Activated CD8-positive, alpha-beta T cell treated with anti-CD3 and anti-CD28 coated beads, Interleukin-2, amount 10 ng/mL, durations not matched to agents 7 days and 5 days (primary cell): ENCODE measurements at regions of chr4 and their contacts with region 1.

Region 1: GRCh38 chr4:155809835-155810234 is 51.0 kb downstream of the GUCY1B1 start:
- DNase-seq: peak; percentile 34
- ATAC-seq: peak; percentile 77
- H3K4me3 Mint-ChIP-seq: no peak overlapping the region
- H3K27ac Mint-ChIP-seq: no peak overlapping the region
- H3K4me1 Mint-ChIP-seq: peaks cover 6% of the 10 kb centered on the region
- H3K27me3 Mint-ChIP-seq: no peaks in the 10 kb centered on the region

Region 2: DNA sequence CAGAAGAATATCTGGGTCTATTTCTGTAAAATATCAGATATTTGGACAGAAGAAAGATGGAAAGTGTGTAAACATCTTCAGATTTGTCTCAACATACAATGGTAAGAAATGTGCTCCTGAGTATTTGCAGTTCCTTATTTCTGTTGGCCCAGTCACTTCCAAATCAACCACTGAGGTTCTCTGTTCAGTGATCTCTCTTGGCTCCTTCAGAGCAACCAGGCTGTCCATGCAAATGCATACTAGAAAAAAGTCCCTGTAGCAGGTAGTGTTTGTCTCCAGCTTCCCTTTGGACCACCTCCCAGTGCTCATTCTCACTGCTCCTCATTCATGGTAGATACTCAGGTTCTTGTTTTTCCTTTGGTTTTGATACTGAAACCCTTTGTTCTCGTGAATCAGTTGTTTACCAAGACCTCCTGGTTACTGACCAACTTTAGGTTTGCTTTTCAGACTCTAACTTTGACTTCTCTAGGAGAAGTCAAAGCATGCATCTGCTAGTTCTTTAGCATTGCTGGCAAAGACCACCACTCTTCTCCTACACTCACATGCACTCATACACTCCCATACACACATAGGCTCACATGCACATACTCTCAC is 27.5 kb after region 1 on chr4:
- CTCF ChIA-PET with region 1: no interaction called
- POLR2A ChIA-PET with region 1: no interaction called
- DNase-seq: no peak
- ATAC-seq: no peak
- H3K4me3 Mint-ChIP-seq: no peak overlapping the region
- H3K27ac Mint-ChIP-seq: no peak overlapping the region
- H3K4me1 Mint-ChIP-seq: no peaks in the 10 kb centered on the region
- H3K27me3 Mint-ChIP-seq: peaks cover 8% of the 10 kb centered on the region

Region 3: DNA sequence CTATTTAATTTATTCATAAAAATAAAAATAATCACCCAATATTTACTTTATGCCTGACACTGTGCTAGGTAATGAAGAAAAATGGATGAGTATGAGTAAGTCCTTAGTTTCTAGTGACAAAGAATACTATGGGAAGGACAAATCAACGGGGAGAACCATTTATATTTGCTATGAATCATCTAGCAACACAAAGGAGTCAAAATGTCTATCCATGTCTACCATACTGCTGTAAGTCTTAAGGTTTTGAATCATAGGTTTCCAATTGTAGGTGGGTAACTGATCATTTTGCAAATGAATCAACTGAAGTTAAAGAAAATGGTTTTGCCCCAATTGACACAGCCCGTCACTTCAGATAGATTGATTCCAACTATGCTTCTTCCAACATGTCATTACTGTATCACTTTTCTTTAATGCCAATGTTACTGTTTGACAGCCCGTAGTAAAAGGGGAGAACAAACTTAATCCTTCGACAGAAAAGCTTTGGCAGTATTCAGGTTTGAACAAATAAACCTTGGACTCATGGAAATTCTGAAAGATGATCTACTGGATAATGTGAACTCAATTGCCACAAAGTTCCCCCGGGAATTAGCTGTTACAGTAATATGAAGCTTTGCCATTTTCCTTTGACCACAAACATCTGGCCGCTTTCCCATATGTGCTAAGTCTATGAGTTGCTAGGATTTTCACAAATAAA is 96.9 kb after region 1 on chr4:
- CTCF ChIA-PET with region 1: no interaction called
- POLR2A ChIA-PET with region 1: no interaction called
- DNase-seq: no peak
- ATAC-seq: no peak
- H3K4me3 Mint-ChIP-seq: no peak overlapping the region
- H3K27ac Mint-ChIP-seq: no peak overlapping the region
- H3K4me1 Mint-ChIP-seq: peaks cover 2% of the 10 kb centered on the region
- H3K27me3 Mint-ChIP-seq: peaks cover 2% of the 10 kb centered on the region

Region 4: DNA sequence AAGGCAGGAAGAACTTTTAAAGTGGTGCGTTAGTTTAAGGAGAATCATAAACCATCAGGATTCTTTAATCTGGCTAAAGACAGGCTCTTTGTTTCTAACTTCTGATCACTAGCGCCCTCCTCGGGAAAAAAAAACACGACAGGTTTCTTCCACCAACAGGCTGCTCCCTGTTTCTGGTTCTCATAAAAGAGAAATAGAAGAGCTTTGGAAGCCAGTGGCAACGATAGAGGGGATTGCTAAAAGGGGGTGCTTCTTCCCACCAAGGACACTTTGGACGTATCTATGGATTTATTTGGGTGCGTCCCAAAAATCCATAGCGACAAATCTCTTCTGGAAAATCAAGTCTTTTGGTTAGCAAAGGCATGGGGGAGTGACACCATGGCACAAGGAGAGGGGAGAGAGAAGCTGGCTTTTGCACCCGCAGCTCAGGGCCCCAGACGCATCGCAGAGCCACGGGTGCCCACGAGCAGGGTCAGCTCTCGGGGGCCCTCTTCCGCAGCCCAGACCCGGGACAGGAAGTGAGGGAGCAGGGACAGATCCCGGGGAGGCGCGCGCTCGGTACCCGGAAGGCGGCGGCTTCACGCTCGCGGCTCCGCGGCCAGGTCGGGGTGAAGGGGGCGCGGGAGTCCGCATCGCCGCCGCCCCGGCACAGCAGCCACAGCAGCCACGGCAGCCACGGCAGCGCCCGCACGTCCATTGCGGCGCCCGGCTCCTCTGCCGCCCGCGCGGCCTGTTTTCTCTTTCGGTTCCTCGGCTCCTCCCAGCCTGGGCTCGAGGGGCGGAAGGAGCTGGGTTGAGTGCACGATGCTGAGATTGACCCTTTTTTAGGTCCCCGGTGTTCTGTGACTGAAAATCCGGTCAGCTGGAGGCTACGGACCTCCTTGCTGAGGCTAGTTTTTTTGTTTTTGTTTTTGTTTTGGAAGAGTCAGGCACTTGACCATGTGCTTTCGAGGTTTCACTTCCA is 143.6 kb after region 1 on chr4 and contains the start of gene CTSO:
- CTCF ChIA-PET with region 1: interaction called, 47 read pairs
- POLR2A ChIA-PET with region 1: interaction called, 3 read pairs
- DNase-seq: peak; percentile 82
- ATAC-seq: peak; percentile 96
- H3K4me3 Mint-ChIP-seq: peak within 1 kb of the TSS; percentile 96
- H3K27ac Mint-ChIP-seq: peak within 1 kb of the TSS; percentile 99
- H3K4me1 Mint-ChIP-seq: peaks cover 17% of the 10 kb centered on the region
- H3K27me3 Mint-ChIP-seq: peaks cover 4% of the 10 kb centered on the region
- total RNA-seq, gene CTSO: 2.3 to 2.4 TPM